Ovary (tissue), 10 donors: ENCODE measurements at regions of chr3 and their contacts with region 1.

Region 1: DNA sequence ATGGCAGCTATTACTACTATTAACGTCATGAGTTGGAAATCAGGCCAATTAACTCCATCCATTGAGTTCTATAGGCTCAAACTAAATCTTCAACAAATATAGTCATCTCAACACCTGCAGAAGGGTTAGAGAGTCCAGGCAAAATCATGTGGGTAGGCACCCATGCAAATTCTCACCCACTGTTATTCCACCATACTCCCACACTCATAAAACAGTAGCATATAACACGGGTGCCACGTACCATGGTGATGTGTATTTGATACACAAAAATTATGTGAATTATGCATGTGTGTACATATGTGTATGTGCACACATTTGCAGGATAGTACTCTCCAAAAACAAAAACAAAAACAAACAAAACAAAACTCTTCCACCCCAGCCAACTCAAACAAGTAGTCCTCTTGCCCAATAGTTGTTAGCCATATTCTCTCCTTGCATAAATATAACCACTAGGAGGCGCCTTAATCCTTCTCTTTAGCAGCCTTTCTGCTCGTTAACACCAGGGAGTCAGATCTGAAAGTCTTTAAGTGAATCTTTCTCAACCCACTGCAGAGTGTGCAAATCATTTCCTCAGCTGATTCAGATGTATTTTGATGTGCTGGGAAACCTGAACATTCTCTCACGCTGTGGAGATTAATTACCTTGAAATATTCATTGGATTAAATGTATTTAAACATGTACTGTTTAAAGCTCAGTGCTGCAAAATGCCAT is 38.0 kb upstream of the COPB2 start:
- DNase-seq: peak in 1 of 5 donors; percentile 28
- H3K4me3 ChIP-seq: no peak overlapping the region
- H3K27ac ChIP-seq: no peak overlapping the region
- H3K4me1 ChIP-seq: peaks cover 1% of the 10 kb centered on the region
- H3K27me3 ChIP-seq: no peaks in the 10 kb centered on the region
- CTCF ChIP-seq: peak; percentile 69 to 87 (median 84)
- EP300 ChIP-seq: no peak
- POLR2A ChIP-seq: no peak

Region 2: DNA sequence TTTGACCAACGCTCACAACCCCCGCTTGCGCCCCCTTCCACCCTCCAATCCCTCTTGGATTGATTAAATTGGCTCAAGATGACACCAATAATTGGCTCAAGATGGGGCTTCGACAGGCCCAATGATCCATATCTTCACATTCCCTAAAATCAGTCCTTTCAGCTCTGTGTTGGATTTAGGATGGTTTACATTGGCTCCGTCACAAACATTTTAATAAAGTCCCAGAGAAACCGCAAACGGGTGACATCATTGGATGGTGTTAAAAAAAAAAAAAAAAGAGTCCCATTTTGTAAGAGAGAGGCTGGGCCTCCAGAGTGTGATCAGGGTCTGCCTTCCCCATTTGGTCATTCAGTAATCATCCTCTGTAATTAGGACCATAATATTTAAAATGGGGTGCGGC is 197.0 kb before region 1 on chr3:
- intact Hi-C with region 1: no loop called
- DNase-seq: no peak
- H3K4me3 ChIP-seq: no peak overlapping the region
- H3K27ac ChIP-seq: no peak overlapping the region
- H3K4me1 ChIP-seq: peaks cover 25% of the 10 kb centered on the region
- H3K27me3 ChIP-seq: no peaks in the 10 kb centered on the region
- CTCF ChIP-seq: no peak
- EP300 ChIP-seq: no peak
- POLR2A ChIP-seq: no peak

Region 3: GRCh38 chr3:139302084-139302800 is 125.2 kb before region 1 on chr3:
- intact Hi-C with region 1: no loop called
- DNase-seq: peak in 2 of 5 donors; percentile 49 to 59
- H3K4me3 ChIP-seq: no peak overlapping the region
- H3K27ac ChIP-seq: no peak overlapping the region
- H3K4me1 ChIP-seq: peaks cover 22% of the 10 kb centered on the region
- H3K27me3 ChIP-seq: no peaks in the 10 kb centered on the region
- CTCF ChIP-seq: no peak
- EP300 ChIP-seq: no peak
- POLR2A ChIP-seq: no peak

Region 4: DNA sequence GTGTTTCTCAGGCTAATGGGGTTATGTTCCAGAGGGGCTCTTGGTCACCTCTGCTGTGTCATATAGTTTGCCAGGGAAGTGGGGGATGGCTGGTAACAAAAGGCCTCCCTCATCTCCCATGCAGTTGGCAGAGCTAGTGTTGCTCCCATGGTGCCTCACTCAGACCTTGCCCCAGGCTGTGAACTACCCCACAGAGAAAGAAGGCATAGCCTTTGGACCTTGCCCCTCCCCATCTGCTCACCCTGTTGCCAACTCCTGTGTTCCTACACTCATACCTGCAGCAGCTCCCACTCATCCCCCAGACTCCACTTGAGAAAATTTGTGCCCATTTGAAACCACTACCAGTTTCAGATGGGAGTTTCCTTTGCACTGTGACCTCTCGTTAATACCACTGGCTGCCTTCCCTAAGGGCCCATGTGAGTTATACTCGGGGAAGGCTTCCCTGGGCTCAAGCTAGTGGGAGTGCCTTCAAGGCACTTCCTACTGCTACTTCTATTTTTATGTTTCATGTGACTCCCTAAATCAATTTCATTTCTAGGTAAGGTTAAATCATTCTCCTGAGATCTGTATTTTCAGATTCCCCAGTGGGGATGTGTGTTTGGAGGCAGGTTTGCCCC is 12.7 kb before region 1 on chr3:
- intact Hi-C with region 1: no loop called
- DNase-seq: no peak
- H3K4me3 ChIP-seq: no peak overlapping the region
- H3K27ac ChIP-seq: no peak overlapping the region
- H3K4me1 ChIP-seq: no peaks in the 10 kb centered on the region
- H3K27me3 ChIP-seq: no peaks in the 10 kb centered on the region
- CTCF ChIP-seq: no peak
- EP300 ChIP-seq: no peak
- POLR2A ChIP-seq: no peak

Region 5: GRCh38 chr3:139808201-139808600 is 380.8 kb after region 1 on chr3:
- intact Hi-C with region 1: no loop called
- DNase-seq: no peak
- H3K4me3 ChIP-seq: no peak overlapping the region
- H3K27ac ChIP-seq: no peak overlapping the region
- H3K4me1 ChIP-seq: peaks cover 3% of the 10 kb centered on the region
- H3K27me3 ChIP-seq: no peaks in the 10 kb centered on the region
- CTCF ChIP-seq: no peak
- EP300 ChIP-seq: no peak
- POLR2A ChIP-seq: no peak

Region 6: DNA sequence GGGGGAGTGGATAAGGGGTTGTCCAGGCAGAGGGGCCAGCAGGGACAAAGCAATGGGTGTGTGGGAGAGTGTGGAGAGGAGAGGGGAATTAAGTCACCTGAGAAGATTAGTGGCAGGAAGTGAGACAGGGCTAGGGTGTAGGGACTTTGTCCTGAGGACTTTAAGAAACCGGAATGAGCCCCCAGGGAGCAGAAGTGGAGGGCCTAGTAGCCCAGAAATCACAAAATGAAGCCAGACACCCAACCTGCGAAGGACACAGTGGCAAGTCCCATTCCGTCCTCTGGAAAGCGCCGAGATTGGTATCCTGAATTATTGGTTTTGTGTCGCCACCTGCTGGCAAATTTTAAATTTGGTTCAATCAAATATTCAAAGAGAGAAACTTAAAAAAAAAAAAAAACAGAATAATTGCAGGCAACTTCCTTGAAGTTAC is 1436.2 kb after region 1 on chr3:
- intact Hi-C with region 1: loop called in 2 of 4 experiments (anchors 10 kb)
- DNase-seq: peak; percentile 47 to 82 (median 63)
- H3K4me3 ChIP-seq: no peak overlapping the region
- H3K27ac ChIP-seq: no peak overlapping the region
- H3K4me1 ChIP-seq: peaks cover 1% of the 10 kb centered on the region
- H3K27me3 ChIP-seq: no peaks in the 10 kb centered on the region
- CTCF ChIP-seq: peak; percentile 29 to 62 (median 58)
- EP300 ChIP-seq: no peak
- POLR2A ChIP-seq: no peak